Endothelial cell of umbilical vein (primary cell): ENCODE measurements at regions of chr2 and their contacts with region 1.

Region 1: GRCh38 chr2:216498418-216499413 is at the start of gene RPL37A:
- DNase-seq: peak; percentile 96
- H3K4me3 ChIP-seq: peak within 1 kb of the TSS; percentile 85 to 99 (median 99)
- H3K27ac ChIP-seq: peak within 1 kb of the TSS; percentile 81
- H3K4me1 ChIP-seq: peaks cover 42% of the 10 kb centered on the region
- H3K27me3 ChIP-seq: no peaks in the 10 kb centered on the region
- CTCF ChIP-seq: no peak
- POLR2A ChIP-seq: peak; percentile 99
- total RNA-seq, gene RPL37A: 2,628 and 2,952 TPM in 2 replicates

Region 2: GRCh38 chr2:215983581-215984351 is 515.0 kb before region 1 on chr2:
- CTCF ChIA-PET with region 1: no interaction called
- POLR2A ChIA-PET with region 1: no interaction called
- dilution Hi-C with region 1: no loop called
- intact Hi-C with region 1: no loop called
- DNase-seq: no peak
- H3K4me3 ChIP-seq: no peak overlapping the region
- H3K27ac ChIP-seq: no peak overlapping the region
- H3K4me1 ChIP-seq: no peaks in the 10 kb centered on the region
- H3K27me3 ChIP-seq: no peaks in the 10 kb centered on the region
- CTCF ChIP-seq: no peak
- POLR2A ChIP-seq: no peak

Region 3: DNA sequence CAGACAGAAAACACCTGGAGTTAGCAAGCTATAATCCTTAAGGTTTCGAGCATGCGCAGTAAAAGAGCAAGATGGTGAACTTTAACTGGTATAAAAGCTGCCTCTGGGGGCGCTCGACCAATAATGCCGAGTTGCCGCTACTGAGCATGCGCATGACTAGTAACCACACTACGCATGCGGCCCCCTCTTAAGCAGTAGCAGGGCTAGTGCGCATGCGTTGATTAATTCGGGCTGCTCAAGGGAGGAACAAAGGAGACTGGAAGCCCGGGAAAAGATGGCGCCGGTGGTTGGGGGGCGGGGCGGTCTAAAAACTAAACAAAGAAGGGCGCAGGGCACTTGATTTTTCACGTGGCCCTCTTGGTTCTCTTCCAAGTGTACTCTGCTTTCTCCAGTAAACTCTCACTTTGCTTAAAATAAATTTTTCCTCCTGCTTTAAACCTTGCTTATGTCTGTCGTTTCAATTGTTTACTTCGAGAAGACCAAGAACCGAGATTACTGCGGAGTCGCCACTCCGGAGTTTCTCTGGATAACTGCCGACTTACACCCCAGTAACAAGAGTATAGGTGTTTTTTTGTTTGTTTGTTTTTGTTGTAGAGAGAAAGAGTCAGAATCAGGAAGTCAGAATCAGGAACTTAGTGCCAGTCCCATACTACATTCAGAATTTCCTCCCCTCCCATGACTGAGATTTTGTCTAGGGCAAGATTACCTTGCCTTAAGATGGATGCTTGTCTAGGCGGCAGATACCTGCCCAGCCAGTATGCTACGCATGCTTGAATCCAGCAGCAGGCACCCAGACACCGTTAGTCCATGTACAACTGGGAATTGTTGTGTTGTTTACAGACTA is 383.8 kb before region 1 on chr2:
- CTCF ChIA-PET with region 1: no interaction called
- POLR2A ChIA-PET with region 1: no interaction called
- dilution Hi-C with region 1: no loop called
- intact Hi-C with region 1: loop called (anchors 5 kb)
- DNase-seq: peak; percentile 100
- H3K4me3 ChIP-seq: peak overlapping the region; percentile 33 to 80 (median 35)
- H3K27ac ChIP-seq: peak overlapping the region; percentile 87
- H3K4me1 ChIP-seq: peaks cover 26% of the 10 kb centered on the region
- H3K27me3 ChIP-seq: no peaks in the 10 kb centered on the region
- CTCF ChIP-seq: peak; percentile 84 to 95
- POLR2A ChIP-seq: peak; percentile 86

Region 4: GRCh38 chr2:216222650-216223352 is 275.9 kb before region 1 on chr2:
- CTCF ChIA-PET with region 1: no interaction called
- POLR2A ChIA-PET with region 1: no interaction called
- dilution Hi-C with region 1: no loop called
- intact Hi-C with region 1: loop called (anchors 2 kb)
- DNase-seq: peak; percentile 32
- H3K4me3 ChIP-seq: no peak overlapping the region
- H3K27ac ChIP-seq: no peak overlapping the region
- H3K4me1 ChIP-seq: peaks cover 30% of the 10 kb centered on the region
- H3K27me3 ChIP-seq: no peaks in the 10 kb centered on the region
- CTCF ChIP-seq: peak; percentile 9 to 26
- POLR2A ChIP-seq: no peak

Region 5: GRCh38 chr2:216412022-216412999 is 86.4 kb before region 1 on chr2 and contains the start of gene SMARCAL1:
- CTCF ChIA-PET with region 1: interaction called, 3 read pairs
- POLR2A ChIA-PET with region 1: interaction called, 11 read pairs
- dilution Hi-C with region 1: no loop called
- intact Hi-C with region 1: loop called (anchors 1 kb)
- DNase-seq: peak; percentile 99
- H3K4me3 ChIP-seq: peak within 1 kb of the TSS; percentile 29 to 64 (median 54)
- H3K27ac ChIP-seq: peak within 1 kb of the TSS; percentile 66
- H3K4me1 ChIP-seq: peaks cover 4% of the 10 kb centered on the region
- H3K27me3 ChIP-seq: no peaks in the 10 kb centered on the region
- CTCF ChIP-seq: no peak
- POLR2A ChIP-seq: peak; percentile 83
- total RNA-seq, gene SMARCAL1: 28.2 and 30.7 TPM in 2 replicates

Region 6: GRCh38 chr2:216535454-216535995 is 36.8 kb after region 1 on chr2:
- CTCF ChIA-PET with region 1: no interaction called
- POLR2A ChIA-PET with region 1: interaction called, 4 read pairs
- dilution Hi-C with region 1: no loop called
- intact Hi-C with region 1: loop called (anchors 2 kb)
- DNase-seq: peak; percentile 96
- H3K4me3 ChIP-seq: no peak overlapping the region
- H3K27ac ChIP-seq: peak overlapping the region; percentile 66
- H3K4me1 ChIP-seq: peaks cover 36% of the 10 kb centered on the region
- H3K27me3 ChIP-seq: no peaks in the 10 kb centered on the region
- CTCF ChIP-seq: no peak
- POLR2A ChIP-seq: peak; percentile 68

Region 7: GRCh38 chr2:216666461-216667233 is 167.9 kb after region 1 on chr2:
- CTCF ChIA-PET with region 1: no interaction called
- POLR2A ChIA-PET with region 1: no interaction called
- dilution Hi-C with region 1: no loop called
- intact Hi-C with region 1: no loop called
- DNase-seq: peak; percentile 74
- H3K4me3 ChIP-seq: no peak overlapping the region
- H3K27ac ChIP-seq: no peak overlapping the region
- H3K4me1 ChIP-seq: peaks cover 8% of the 10 kb centered on the region
- H3K27me3 ChIP-seq: peaks cover 0 to 4% of the 10 kb centered on the region in 2 experiments
- CTCF ChIP-seq: peak; percentile 97 to 98
- POLR2A ChIP-seq: no peak